H1 (cell line): ENCODE measurements at regions of chr2 and their contacts with region 1.

Region 1: DNA sequence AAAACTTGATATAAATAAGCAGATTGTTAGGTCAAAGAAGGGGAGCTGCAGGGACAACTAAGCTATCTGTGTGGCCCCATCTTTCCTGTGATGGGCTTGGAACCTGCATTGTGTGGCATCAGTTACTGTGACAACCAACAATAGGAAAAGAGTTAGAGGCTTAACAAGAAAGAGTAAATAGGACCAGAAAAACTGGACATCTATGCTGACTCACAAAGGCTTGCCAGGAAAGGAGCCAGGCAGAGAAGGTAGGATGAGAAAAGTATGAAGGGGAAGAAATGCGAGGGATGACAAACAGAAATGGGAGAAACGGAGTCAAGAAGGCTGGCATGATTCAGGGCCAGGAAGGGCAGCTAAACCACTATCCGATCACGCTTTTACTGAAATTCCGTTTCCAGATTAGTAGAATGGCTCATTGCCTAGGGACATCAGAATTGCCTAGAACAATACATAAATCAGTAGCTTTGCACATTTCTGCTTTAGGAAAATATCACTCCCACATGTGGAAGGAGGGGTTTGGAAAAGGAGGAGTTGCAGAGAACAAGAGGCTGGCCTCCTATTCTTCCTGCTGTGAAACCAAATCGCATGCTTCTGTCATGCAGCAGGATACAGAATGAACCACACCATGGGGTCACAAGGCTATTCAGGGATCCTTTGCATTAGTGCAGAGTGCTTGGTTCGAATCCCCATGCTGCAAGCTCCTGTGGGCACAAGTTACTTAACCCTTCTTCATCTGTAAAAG is 7.3 kb downstream of the PLA2R1 start:
- DNase-seq: peak; percentile 67
- H3K4me3 ChIP-seq: peak overlapping the region in 1 of 4 experiments; percentile 9; a peak in 1 of 8 replicates
- H3K27ac ChIP-seq: no peak overlapping the region
- H3K4me1 ChIP-seq: peaks cover 0 to 7% (median 4%) of the 10 kb centered on the region in 4 experiments; a peak in 3 of 7 replicates
- H3K27me3 ChIP-seq: no peaks in the 10 kb centered on the region
- CTCF ChIP-seq: no peak
- EP300 ChIP-seq: no peak
- POLR2A ChIP-seq: no peak
- RAD21 ChIP-seq: no peak

Region 2: DNA sequence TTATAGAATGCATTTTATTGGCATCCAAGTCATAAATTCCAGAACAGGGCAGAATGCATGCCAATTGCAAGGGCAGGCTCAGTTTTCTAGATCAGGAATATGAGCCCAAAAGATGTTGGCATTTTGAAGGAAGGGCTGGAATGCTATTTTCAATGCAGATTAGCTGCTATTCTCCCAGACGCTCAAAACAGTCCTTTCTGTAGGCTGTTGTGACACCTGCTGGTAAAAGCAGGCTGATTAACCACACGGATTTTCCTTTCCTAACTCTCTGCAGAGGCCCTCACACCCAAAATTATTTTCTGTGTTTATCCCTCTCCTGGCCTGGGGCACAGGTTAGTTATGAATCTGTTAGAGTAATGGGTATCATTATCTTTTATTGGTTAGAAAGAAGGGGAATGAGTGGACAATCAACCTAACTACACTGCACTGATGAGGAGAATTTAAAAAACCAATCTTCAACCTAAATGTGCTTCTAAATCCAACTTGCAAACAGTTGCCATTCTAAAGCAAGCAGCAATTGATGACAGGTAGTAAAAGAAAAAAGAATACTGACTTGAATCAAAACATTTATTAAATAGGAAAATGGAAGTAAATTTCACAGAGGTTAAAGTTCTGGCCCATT is 86.8 kb before region 1 on chr2:
- CTCF ChIA-PET with region 1: no interaction called
- POLR2A ChIA-PET with region 1: no interaction called
- DNase-seq: no peak
- H3K4me3 ChIP-seq: no peak overlapping the region
- H3K27ac ChIP-seq: no peak overlapping the region
- H3K4me1 ChIP-seq: no peaks in the 10 kb centered on the region
- H3K27me3 ChIP-seq: no peaks in the 10 kb centered on the region
- CTCF ChIP-seq: peak in 2 of 3 experiments; percentile 77 to 86; a peak in 3 of 4 replicates
- EP300 ChIP-seq: no peak
- POLR2A ChIP-seq: no peak
- RAD21 ChIP-seq: peak; percentile 95 to 96

Region 3: DNA sequence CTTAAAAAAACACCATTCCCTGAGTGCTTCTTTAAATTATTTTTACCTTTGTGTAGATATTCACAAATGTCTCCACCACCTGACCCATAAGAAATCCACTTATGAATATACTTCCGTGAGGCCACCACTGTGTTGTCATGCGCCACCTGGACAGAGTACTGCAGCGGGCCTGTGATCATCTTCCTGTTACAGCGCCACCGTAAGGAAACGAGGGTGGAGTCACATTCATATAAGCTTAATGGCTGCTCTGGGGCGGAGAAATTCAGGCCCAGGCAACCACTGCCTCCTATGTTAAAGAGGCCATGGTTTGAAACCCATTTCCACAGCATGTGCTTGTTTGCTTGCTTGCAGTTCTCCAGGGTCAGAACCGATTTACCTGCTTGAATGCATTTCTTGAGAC is 10.4 kb before region 1 on chr2:
- CTCF ChIA-PET with region 1: interaction called, 13 read pairs
- POLR2A ChIA-PET with region 1: interaction called, 3 read pairs
- DNase-seq: no peak
- H3K4me3 ChIP-seq: no peak overlapping the region
- H3K27ac ChIP-seq: no peak overlapping the region
- H3K4me1 ChIP-seq: peaks cover 0 to 8% (median 2%) of the 10 kb centered on the region in 4 experiments; a peak in 4 of 7 replicates
- H3K27me3 ChIP-seq: no peaks in the 10 kb centered on the region
- CTCF ChIP-seq: peak in 2 of 3 experiments; percentile 14 to 44; a peak in 2 of 4 replicates
- EP300 ChIP-seq: no peak
- POLR2A ChIP-seq: no peak
- RAD21 ChIP-seq: 0 out of 4 replicates have a peak, but pooled peaks of 1 of the 2 experiments have one; percentile 10